Calu3 (cell line): ENCODE measurements at regions of chr3 and their contacts with region 1.

Region 1: GRCh38 chr3:128133273-128134084 is 9.9 kb upstream of the RUVBL1 start:
- DNase-seq: peak; percentile 76
- H3K4me3 Mint-ChIP-seq: no peak overlapping the region
- H3K27ac Mint-ChIP-seq: no peak overlapping the region
- H3K4me1 Mint-ChIP-seq: no peaks in the 10 kb centered on the region
- H3K27me3 Mint-ChIP-seq: peaks cover 36% of the 10 kb centered on the region
- CTCF ChIP-seq: peak; percentile 83

Region 2: DNA sequence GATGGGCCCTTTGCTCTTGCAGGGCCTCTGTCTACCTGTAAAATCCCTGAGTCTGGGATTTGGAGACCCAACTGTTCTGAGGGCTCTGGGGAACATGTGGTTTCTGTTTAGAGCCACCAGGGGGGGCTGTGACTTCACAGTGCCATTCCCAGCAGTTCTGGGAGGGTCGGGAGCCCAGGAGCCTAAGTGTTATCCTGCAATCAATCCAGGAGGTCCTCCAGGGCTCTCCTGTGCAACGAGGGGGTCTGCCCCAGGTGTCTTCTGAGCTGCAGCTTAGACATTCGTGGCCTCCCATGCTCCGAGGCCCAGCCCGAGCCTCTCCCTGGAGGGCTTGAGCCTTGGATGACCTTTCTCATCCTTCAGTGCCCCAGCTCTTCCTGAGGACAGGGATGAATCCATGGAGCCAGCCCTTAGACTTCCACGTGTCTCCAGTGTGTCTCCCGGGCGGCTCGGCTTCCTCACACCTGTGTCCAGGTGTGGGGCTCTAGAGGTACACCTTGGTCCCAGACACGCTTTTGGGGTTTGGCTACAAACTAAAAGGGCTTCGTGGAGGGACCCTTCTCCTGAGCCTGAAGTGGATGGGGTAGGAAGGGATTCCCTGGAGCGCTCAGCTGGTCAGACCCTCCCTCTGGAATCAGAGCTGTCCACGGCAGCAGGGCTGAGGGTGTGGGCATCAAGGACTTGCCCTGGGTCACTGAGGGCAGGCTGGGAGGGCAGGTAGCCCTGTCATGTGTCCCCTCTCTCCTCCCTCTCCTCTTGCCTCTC is 481.1 kb before region 1 on chr3:
- CTCF ChIA-PET with region 1: interaction called, 3 read pairs
- intact Hi-C with region 1: loop called (anchors 1 kb)
- DNase-seq: peak; percentile 78
- H3K4me3 Mint-ChIP-seq: no peak overlapping the region
- H3K27ac Mint-ChIP-seq: no peak overlapping the region
- H3K4me1 Mint-ChIP-seq: no peaks in the 10 kb centered on the region
- H3K27me3 Mint-ChIP-seq: no peaks in the 10 kb centered on the region
- CTCF ChIP-seq: peak; percentile 97

Region 3: GRCh38 chr3:128011140-128011539 is 122.3 kb before region 1 on chr3:
- CTCF ChIA-PET with region 1: interaction called, 6 read pairs
- intact Hi-C with region 1: loop called (anchors 1 kb)
- DNase-seq: peak; percentile 94
- H3K4me3 Mint-ChIP-seq: no peak overlapping the region
- H3K27ac Mint-ChIP-seq: no peak overlapping the region
- H3K4me1 Mint-ChIP-seq: peaks cover 22% of the 10 kb centered on the region
- H3K27me3 Mint-ChIP-seq: peaks cover 32% of the 10 kb centered on the region
- CTCF ChIP-seq: peak; percentile 52

Region 4: DNA sequence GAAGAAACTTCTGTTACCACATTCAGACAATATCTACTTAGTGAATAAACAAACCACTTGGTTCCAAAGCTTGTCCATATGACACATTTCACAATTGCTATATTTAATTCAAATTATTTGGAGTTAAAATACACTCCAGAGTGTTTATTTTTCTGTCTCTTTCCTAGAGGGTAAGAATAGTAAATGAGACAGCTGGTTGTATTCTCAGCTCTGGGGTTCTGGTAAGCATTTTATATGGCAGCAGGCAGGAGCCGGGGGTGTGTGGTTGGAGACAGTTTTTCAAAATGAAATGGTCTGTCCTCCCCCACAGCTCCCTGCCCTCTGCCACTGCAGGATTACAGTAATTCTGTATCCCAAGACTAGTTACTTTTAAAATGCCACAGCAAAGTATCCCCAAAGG is 92.1 kb before region 1 on chr3:
- CTCF ChIA-PET with region 1: no interaction called
- intact Hi-C with region 1: no loop called
- DNase-seq: no peak
- H3K4me3 Mint-ChIP-seq: no peak overlapping the region
- H3K27ac Mint-ChIP-seq: no peak overlapping the region
- H3K4me1 Mint-ChIP-seq: peaks cover under 1% of the 10 kb centered on the region
- H3K27me3 Mint-ChIP-seq: peaks cover 69% of the 10 kb centered on the region
- CTCF ChIP-seq: no peak

Region 5: GRCh38 chr3:128095222-128095703 is 38.2 kb before region 1 on chr3:
- CTCF ChIA-PET with region 1: interaction called, 32 read pairs
- intact Hi-C with region 1: loop called (anchors 1 kb)
- DNase-seq: peak; percentile 93
- H3K4me3 Mint-ChIP-seq: no peak overlapping the region
- H3K27ac Mint-ChIP-seq: no peak overlapping the region
- H3K4me1 Mint-ChIP-seq: peaks cover 23% of the 10 kb centered on the region
- H3K27me3 Mint-ChIP-seq: no peaks in the 10 kb centered on the region
- CTCF ChIP-seq: peak; percentile 91

Region 6: DNA sequence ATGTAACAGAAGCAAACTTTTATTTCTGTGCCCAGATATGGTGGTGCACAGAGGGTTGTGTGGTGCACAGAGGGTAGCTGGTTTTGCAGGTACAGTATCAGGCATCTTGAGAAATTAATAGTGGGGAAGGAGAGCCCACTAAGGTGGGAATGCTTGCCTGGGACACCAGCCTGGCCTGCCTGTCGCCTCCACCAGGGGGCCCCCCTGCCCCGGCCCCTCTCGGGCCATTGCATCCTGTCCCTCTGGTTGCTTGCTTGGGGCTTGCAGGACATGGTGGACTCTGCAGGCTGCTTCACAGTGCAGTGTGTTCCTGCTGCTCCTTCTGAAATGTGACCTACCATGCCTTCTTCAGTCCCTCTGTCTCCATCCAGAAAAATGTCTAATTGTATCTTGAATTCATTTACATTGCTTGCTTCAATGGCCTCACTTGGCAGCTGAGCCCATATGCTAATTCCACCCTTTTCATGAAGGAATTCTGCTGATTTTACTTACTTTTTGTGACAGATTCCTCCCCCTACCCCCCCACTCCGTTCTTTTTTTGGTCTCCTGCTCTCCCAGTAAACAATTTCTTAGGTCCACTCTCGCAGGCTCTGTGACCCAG is 93.4 kb after region 1 on chr3:
- CTCF ChIA-PET with region 1: no interaction called
- intact Hi-C with region 1: no loop called
- DNase-seq: peak; percentile 83
- H3K4me3 Mint-ChIP-seq: no peak overlapping the region
- H3K27ac Mint-ChIP-seq: no peak overlapping the region
- H3K4me1 Mint-ChIP-seq: no peaks in the 10 kb centered on the region
- H3K27me3 Mint-ChIP-seq: no peaks in the 10 kb centered on the region
- CTCF ChIP-seq: peak; percentile 93